ENCODE measurements at regions of chr17 and their contacts with region 1.

Region 1: GRCh38 chr17:76014184-76014924 is 12.8 kb downstream of the EVPL start:
- DNase-seq: peak; percentile 71
- H3K27ac ChIP-seq: peak overlapping the region; percentile 6
- CTCF ChIP-seq: peak; percentile 98

Region 2: DNA sequence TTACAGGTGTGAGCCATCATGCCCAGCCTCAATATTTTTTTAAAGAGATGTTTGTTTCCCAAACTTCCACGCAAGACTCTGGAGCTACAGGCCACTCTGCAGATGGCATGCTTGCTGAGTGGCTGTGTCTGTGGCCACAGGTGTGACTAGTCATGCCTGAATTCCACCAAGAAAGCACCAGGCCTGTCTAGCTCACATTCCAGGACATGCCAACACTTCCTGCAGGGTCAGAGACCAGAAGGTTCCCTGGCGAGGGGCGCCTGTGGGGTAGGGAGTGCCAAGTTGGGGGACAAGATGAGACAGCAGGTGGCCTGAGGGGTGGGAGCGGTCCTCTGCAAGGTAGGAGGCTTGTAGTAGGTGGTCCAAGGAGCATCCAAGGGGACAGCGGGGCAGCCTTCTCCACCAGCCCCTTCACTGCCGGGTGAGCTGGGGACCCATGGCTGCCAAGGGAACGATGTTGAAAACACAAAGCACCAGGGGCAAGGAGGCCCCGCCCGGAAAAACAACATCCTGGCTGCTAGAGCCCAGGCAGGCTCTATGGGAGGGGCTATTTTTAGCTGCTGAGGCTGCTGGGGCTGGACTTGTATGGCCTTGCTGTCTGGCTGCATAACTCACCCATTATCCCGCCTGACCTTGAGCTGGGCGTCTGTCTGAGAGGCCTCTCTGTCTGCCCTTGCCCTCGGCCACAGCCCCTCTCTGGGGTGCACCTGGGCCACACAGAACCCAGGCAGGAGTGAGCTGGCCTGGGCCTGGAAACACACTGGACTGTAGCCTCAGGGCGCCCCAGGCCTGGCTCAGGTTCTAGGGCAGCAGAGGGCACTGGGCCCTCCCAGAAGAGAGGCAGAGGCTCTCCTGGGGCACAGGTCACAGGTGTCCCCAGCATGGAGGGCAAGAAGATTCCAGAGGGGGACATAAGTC is 141.7 kb before region 1 on chr17:
- CTCF ChIA-PET with region 1: no interaction called
- POLR2A ChIA-PET with region 1: no interaction called
- DNase-seq: peak; percentile 80
- H3K27ac ChIP-seq: peak overlapping the region; percentile 98
- CTCF ChIP-seq: no peak

Region 3: GRCh38 chr17:76056835-76057234 is 42.5 kb after region 1 on chr17:
- CTCF ChIA-PET with region 1: interaction called, 20 read pairs
- POLR2A ChIA-PET with region 1: no interaction called
- DNase-seq: no peak
- H3K27ac ChIP-seq: no peak overlapping the region
- CTCF ChIP-seq: no peak

Region 4: DNA sequence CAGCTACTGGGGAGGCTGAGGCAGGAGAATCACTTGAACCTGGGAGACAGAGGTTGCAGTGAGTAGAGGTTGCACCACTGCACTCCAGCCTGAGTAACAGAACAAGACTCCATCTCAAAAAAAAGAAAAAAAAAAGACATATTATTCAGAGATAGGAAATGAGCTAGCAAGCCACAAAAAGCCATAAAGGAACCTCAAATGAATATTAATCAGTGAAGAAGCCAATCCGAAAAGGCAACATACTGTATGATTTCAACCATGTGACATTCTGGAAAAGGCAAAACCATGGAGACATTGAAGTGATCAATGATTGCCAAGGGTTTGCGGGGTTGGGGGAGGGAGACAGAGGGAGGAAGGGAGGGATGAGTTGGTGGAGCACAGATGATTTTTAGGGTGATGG is 97.6 kb after region 1 on chr17:
- CTCF ChIA-PET with region 1: no interaction called
- POLR2A ChIA-PET with region 1: no interaction called
- DNase-seq: no peak
- H3K27ac ChIP-seq: no peak overlapping the region
- CTCF ChIP-seq: no peak